Posterior cingulate gyrus (tissue), 11 donors: ENCODE measurements at regions of chr4 and their contacts with region 1.

Region 1: GRCh38 chr4:67700738-67701516 is at the start of gene UBA6:
- DNase-seq: peak; percentile 90 to 99 (median 94)

Region 2: GRCh38 chr4:67545199-67546003 is 155.5 kb before region 1 on chr4 and contains the start of gene CENPC:
- intact Hi-C with region 1: loop called (anchors 1 kb)
- DNase-seq: peak; percentile 93 to 99 (median 96)

Region 3: GRCh38 chr4:67785528-67785927 is 84.6 kb after region 1 on chr4:
- intact Hi-C with region 1: no loop called
- DNase-seq: no peak